PC-3 (cell line): ENCODE measurements at regions of chr9 and their contacts with region 1.

Region 1: DNA sequence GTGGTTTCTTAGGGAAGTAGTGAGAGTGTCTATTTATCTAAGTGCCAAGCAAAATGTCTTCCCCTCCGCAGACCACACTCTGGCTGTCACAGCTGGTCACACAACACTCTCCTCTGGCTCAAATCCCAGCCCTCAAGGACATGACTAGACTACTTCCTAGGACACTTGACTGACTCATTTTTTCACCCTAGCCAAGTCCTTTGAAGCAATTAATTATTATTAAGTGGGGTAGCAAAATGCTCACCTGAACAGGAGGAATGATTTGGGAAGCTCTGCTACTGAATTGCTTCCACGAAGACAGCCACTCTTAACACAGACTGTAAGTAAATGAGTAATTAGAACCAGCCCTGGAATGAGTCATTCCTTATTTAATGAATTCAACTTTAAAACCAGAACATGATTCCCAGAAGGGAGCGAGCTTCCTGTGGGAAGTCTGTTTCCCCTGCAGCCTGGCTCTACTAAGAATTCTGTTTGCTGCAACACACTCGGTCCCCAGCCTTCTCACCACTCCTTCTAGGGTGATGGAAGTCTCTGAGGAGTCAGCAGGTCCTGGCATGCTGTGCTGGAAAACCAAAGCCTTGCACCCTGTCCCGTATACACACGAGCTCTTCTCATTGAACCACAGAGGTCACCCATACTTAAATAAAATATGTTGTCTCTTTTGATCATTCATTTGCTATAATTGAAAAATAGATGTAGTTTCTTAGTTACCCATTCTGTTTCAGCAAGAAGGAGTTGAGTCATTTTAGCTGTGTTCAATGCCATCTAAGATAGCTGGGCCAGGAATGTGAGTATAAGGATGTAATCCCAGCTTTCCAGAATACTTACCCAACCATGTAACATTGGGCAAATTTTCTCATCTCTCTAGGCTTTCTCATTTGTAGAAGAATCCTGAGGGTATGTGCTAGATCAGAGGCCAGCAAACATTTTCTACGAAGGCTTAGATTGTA is 218.6 kb upstream of the RASEF start:
- DNase-seq: peak; percentile 65
- ATAC-seq: peak; percentile 76
- H3K4me3 ChIP-seq: no peak overlapping the region
- H3K27ac ChIP-seq: peak overlapping the region; percentile 39
- H3K4me1 ChIP-seq: peaks cover 21% of the 10 kb centered on the region
- H3K27me3 ChIP-seq: no peaks in the 10 kb centered on the region
- CTCF ChIP-seq: no peak

Region 2: DNA sequence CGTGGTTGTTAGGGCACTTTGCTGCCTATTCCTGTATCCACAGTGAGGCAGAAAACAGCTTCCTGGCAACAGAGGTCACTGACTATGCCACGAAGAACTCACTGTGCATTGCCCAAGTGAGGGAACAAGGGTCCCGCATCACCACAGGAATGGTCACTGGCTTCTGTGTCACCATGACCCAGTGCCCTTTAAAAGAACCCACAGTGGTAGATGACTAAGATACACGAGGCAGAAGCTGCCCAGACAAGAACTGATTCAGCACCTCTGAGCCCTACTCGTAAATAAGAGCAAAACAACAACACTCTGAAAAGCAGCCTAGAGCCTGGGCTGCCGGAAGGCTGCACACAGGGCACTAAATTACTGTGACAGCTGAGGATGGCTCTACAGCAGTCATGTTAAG is 18.0 kb after region 1 on chr9:
- CTCF ChIA-PET with region 1: no interaction called
- POLR2A ChIA-PET with region 1: no interaction called
- intact Hi-C with region 1: loop called (anchors 2 kb)
- DNase-seq: peak; percentile 79
- ATAC-seq: peak; percentile 88
- H3K4me3 ChIP-seq: peak overlapping the region; percentile 61
- H3K27ac ChIP-seq: peak overlapping the region; percentile 89
- H3K4me1 ChIP-seq: peaks cover 20% of the 10 kb centered on the region
- H3K27me3 ChIP-seq: no peaks in the 10 kb centered on the region
- CTCF ChIP-seq: no peak